Mammary epithelial cell (primary cell): ENCODE measurements at regions of chr7 and their contacts with region 1.

Region 1: GRCh38 chr7:142632291-142633134 is 116.8 kb upstream of the PRSS1 start:
- DNase-seq: peak; percentile 55
- H3K4me3 ChIP-seq: no peak overlapping the region
- H3K27ac ChIP-seq: no peak overlapping the region
- H3K4me1 ChIP-seq: no peaks in the 10 kb centered on the region
- H3K27me3 ChIP-seq: no peaks in the 10 kb centered on the region
- CTCF ChIP-seq: peak; percentile 72 to 74

Region 2: GRCh38 chr7:142603870-142604448 is 28.6 kb before region 1 on chr7:
- CTCF ChIA-PET with region 1: no interaction called
- dilution Hi-C with region 1: no loop called
- in situ Hi-C with region 1: no loop called
- intact Hi-C with region 1: loop called (anchors 1 kb)
- DNase-seq: peak; percentile 32
- H3K4me3 ChIP-seq: no peak overlapping the region
- H3K27ac ChIP-seq: no peak overlapping the region
- H3K4me1 ChIP-seq: no peaks in the 10 kb centered on the region
- H3K27me3 ChIP-seq: no peaks in the 10 kb centered on the region
- CTCF ChIP-seq: peak; percentile 88 to 89

Region 3: GRCh38 chr7:142811154-142811737 is 178.7 kb after region 1 on chr7:
- CTCF ChIA-PET with region 1: no interaction called
- dilution Hi-C with region 1: no loop called
- in situ Hi-C with region 1: loop called in 1 of 2 experiments (anchors 25 kb)
- intact Hi-C with region 1: loop called (anchors 1 kb)
- DNase-seq: peak; percentile 31
- H3K4me3 ChIP-seq: no peak overlapping the region
- H3K27ac ChIP-seq: no peak overlapping the region
- H3K4me1 ChIP-seq: no peaks in the 10 kb centered on the region
- H3K27me3 ChIP-seq: no peaks in the 10 kb centered on the region
- CTCF ChIP-seq: peak; percentile 64 to 65